Dorsolateral prefrontal cortex (tissue), 120 donors: ENCODE measurements at regions of chr3 and their contacts with region 1.

Region 1: DNA sequence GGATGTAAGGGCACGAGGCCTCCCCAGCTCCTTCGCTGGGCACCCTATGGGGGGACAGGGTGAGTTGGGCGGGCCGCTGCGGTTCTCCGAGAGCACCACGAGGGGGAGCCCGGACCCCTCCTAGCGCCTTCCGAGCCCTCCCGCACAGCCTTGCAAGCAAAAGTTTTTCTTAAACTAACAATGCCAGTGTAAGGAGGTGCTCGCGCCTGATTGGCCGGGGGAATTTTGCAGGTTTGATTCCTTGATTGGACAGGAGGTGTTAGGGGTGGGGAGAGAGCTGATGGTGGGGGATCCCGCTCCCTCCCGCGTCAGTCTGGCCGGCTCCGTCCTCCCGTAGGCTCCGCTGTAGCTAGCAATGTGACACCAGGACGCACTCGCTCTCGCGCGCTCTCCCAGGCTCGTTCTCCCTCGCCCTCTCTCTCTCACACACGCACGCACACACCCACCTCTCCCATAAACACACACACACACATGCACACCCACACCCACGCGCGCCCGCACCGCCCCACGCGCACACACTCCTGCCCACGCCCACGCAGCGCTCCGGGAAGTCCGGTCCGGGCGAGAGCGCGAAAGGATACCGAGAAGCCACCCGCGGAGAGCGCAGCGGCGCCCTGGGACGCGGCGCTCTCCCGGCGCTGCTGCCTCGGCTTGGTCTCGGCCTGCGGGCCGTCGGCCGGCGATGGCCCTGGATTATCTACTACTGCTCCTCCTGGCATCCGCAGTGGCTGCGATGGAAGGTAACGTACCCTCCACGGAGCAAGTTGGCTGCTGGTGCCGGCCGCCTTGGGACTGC is at the start of gene EPHB1:
- DNase-seq: peak; percentile 70 to 96 (median 88)
- H3K4me3 ChIP-seq: peak within 1 kb of the TSS; percentile 41 to 84 (median 71)
- H3K27ac ChIP-seq: peak within 1 kb of the TSS in 42 of 59 donors; percentile 4 to 78 (median 50)
- H3K27me3 ChIP-seq: peaks cover 0 to 34% (median 9%) of the 10 kb centered on the region in 45 donors
- CTCF ChIP-seq: peak; percentile 66 to 98 (median 92)
- total RNA-seq, gene EPHB1: 10.0 to 54.8 (median 23.0) TPM

Region 2: DNA sequence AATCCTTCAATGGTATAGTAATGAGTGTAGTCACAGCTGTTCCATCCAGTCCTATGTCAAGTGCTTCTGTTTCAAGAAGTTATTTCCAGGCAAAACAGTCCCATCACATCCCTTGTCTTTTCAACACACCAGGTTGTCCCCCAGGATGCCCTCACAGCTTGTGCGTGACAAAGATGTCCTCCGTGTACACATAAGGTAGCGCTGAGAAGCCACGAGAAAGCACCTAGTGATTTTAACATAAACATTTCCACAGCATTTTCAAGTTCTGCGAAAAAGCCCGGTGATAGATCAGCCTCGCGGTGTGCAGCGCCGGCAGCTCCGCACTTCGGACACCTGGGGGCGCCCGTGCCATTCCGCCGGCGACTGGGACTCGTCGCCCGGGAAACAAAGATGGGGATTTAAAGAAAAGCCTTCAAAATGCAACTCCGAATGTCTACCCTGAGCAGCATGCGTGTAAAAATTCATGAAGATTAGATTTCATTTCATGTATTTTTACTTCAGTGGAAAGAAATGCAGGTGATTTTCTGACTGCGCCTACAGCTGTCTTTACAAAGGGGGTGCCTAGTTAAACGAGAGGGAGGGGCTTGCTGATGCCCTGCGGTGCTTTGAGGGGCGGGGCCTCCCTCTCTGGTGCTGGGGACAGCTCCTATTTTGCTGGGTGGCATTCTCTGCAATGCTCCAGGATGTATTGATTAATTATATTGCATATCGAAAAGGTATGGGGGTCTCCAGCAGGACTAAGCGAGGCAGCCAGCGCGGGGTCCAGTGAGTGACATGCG is 194.3 kb before region 1 on chr3:
- intact Hi-C with region 1: loop called (anchors 5 kb)
- DNase-seq: peak in 9 of 10 donors; percentile 55 to 84 (median 75)
- H3K4me3 ChIP-seq: peak overlapping the region in 52 of 59 donors; percentile 5 to 69 (median 40)
- H3K27ac ChIP-seq: peak overlapping the region in 51 of 59 donors; percentile 14 to 87 (median 73)
- H3K27me3 ChIP-seq: no peaks in the 10 kb centered on the region
- CTCF ChIP-seq: peak; percentile 59 to 99 (median 96)

Region 3: GRCh38 chr3:134721219-134721618 is 73.9 kb before region 1 on chr3:
- intact Hi-C with region 1: no loop called
- DNase-seq: no peak
- H3K4me3 ChIP-seq: no peak overlapping the region
- H3K27ac ChIP-seq: no peak overlapping the region
- H3K27me3 ChIP-seq: no peaks in the 10 kb centered on the region
- CTCF ChIP-seq: no peak

Region 4: GRCh38 chr3:134898181-134898754 is 103.1 kb after region 1 on chr3:
- intact Hi-C with region 1: loop called in 1 of 2 experiments (anchors 5 kb)
- DNase-seq: no peak
- H3K4me3 ChIP-seq: no peak overlapping the region
- H3K27ac ChIP-seq: no peak overlapping the region
- H3K27me3 ChIP-seq: no peaks in the 10 kb centered on the region
- CTCF ChIP-seq: no peak

Region 5: DNA sequence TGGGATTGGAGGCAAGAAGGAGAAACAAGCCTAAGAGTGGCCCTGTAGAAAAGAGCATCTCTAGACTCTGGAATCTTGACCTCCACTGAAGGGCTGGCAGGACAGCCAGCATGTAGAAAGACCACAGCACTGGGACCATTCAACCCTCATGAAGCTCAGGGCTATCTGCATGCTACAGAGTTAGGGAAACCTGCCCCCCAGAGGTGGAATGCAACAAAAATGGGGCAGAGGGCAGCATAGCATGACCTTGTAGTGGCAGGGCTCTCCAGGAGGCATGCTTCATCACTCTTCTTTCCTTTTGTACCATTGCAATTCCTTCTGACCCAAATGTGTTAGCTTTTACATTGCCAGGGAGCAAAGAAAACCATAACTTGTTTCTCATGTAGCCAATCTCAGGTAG is 445.3 kb after region 1 on chr3:
- intact Hi-C with region 1: loop called (anchors 5 to 10 kb)
- DNase-seq: no peak
- H3K4me3 ChIP-seq: no peak overlapping the region
- H3K27ac ChIP-seq: no peak overlapping the region
- H3K27me3 ChIP-seq: no peaks in the 10 kb centered on the region
- CTCF ChIP-seq: peak in 38 of 56 donors; percentile 9 to 65 (median 26)

Region 6: GRCh38 chr3:135503760-135504686 is 708.9 kb after region 1 on chr3:
- intact Hi-C with region 1: loop called (anchors 1 to 2 kb)
- DNase-seq: peak; percentile 63 to 88 (median 80)
- H3K4me3 ChIP-seq: peak overlapping the region in 45 of 59 donors; percentile 4 to 61 (median 34)
- H3K27ac ChIP-seq: peak overlapping the region in 6 of 59 donors; percentile 1 to 51 (median 17)
- H3K27me3 ChIP-seq: peaks cover 0 to 8% (median 0%) of the 10 kb centered on the region in 45 donors
- CTCF ChIP-seq: peak; percentile 14 to 80 (median 68)

Region 7: DNA sequence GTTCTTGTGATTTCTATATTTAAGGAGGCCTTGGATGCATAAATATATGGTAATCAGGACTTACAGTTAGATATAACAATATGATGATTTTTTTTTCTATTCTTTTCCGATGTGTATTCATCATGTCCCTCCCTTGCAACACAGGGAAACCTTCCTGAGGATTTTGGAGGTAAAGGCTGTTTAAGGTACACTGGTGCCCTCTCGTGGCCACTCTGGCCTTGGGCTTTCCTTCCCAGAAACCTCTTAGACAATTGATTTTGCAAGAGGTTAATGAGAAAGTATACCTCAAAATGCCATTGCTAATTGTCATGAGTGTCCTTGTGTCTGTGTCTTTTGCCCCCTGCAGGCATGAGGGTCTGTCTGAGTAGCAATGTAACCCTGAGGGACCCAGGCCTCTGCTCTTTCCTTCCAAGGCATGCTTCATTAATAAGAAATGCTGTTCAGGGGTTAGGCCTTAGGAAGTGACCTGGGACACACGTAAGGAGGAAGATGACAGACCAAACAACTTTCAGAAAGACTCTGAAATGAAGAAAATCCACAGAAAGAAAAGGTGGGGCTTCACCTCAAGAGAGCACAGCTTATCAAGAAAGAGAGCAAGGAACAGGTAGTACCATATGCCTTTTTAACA is 1100.1 kb after region 1 on chr3:
- intact Hi-C with region 1: loop called (anchors 1 to 10 kb)
- DNase-seq: peak; percentile 59 to 88 (median 74)
- H3K4me3 ChIP-seq: no peak overlapping the region
- H3K27ac ChIP-seq: no peak overlapping the region
- H3K27me3 ChIP-seq: no peaks in the 10 kb centered on the region
- CTCF ChIP-seq: peak; percentile 65 to 89 (median 79)

Region 8: DNA sequence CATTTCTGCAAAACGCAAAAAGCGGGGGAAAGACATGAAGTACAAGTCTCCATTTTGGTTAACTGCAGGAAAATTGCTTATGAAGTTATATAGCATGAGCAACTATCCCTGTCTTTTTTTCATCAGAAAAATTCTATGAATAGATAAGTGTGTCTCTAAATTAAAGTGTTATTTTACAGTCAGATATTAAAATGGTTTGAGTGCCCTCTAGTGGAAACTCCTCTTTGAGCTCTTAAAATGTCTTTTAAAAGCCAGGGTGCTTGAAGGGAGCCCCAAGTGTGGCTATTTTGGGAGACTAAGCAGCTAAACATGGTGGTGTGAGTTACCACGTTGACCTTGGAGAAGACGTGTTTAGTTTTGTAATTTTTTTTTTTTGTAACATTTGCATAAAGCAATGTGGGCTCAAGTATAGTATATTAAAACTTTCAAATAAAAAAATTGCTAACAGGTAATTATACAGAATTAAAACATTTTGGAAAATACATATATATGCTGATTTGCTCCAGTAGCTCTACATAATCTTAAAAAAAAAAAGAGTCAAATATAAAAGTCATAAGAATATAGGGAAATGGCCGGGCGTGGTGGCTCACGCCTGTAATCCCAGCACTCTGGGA is 1247.6 kb after region 1 on chr3:
- intact Hi-C with region 1: loop called in 1 of 2 experiments (anchors 10 kb)
- DNase-seq: no peak
- H3K4me3 ChIP-seq: no peak overlapping the region
- H3K27ac ChIP-seq: peak overlapping the region in 1 of 59 donors; percentile 2
- H3K27me3 ChIP-seq: no peaks in the 10 kb centered on the region
- CTCF ChIP-seq: peak; percentile 57 to 90 (median 75)

Region 9: DNA sequence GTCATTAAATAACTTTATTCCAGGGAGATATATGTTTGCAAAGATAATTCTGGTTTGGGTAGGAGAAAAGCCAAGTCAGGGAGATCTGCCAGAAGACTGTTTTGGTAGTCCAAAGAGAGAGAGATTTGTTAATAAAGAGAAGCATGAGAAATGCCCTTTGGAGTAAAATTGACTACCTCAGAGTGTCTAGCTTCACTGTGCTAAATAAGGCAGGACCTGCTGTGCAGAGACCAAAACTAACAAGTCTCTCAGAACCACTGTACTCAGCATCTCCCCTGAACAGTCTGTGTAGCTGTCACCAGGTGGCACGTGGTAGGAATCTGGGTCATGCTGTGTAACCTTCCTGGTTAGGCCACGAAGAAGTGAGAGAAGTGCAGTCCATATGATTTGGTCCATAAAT is 1992.2 kb after region 1 on chr3:
- intact Hi-C with region 1: no loop called
- DNase-seq: peak in 1 of 10 donors; percentile 57
- H3K4me3 ChIP-seq: peak overlapping the region in 6 of 59 donors; percentile 17 to 49 (median 26)
- H3K27ac ChIP-seq: peak overlapping the region in 42 of 59 donors; percentile 1 to 87 (median 60)
- H3K27me3 ChIP-seq: no peaks in the 10 kb centered on the region
- CTCF ChIP-seq: no peak